Pancreas (tissue), 10 donors: ENCODE measurements at regions of chr2 and their contacts with region 1.

Region 1: DNA sequence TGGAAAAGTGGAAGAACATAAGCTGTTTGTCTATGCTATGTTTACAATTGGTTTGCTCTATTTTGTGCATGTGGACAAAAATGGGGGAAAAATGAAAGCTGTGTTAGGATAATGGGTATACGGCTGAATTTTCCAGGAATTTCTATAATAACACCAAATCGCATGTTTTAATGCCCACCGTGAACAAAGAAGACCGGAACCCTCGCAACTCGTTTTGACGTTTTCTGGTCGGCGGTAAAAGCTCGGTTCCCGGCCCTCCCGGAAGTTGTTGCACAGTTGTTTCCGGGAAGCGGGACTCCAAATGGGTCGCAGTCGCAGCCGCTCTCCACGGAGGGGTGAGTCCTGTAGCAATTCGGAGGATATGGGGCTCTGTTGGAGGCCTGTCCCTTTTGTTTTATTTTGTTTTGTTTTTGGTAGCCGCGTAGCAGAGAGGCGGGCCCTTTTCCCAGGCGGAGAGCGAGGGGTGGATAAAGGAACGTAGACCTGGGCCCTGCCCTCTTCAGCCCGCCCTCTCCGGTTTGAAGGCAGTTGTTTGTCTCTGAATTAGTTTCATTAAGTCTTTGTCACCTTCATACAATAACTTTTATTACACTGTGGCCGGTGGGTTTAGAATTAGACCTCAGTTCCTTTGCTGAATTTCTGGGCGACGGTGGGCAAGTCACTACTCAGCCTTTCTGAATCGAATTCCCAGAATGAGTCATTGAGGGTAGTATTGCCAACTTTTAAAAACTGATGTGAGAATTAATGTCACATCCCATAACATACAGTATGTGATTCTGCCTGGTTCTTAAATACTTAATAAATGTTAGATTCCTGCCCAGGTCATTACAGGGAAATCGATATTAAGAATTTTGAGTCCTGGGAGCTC is at the start of gene SNRNP27:
- DNase-seq: peak; percentile 70 to 91 (median 80)
- ATAC-seq: peak; percentile 94 to 98 (median 94)
- H3K4me3 ChIP-seq: peak within 1 kb of the TSS; percentile 49 to 76 (median 64)
- H3K27ac ChIP-seq: peak within 1 kb of the TSS; percentile 54 to 81 (median 67)
- H3K4me1 ChIP-seq: peaks cover 0 to 11% (median 6%) of the 10 kb centered on the region in 3 donors
- H3K27me3 ChIP-seq: no peaks in the 10 kb centered on the region
- CTCF ChIP-seq: no peak
- total RNA-seq, gene SNRNP27: 8.3 to 18.5 (median 12.1) TPM

Region 2: GRCh38 chr2:68837164-68837860 is 1056.6 kb before region 1 on chr2:
- intact Hi-C with region 1: no loop called
- DNase-seq: peak; percentile 33 to 83 (median 56)
- ATAC-seq: peak; percentile 60 to 78 (median 66)
- H3K4me3 ChIP-seq: no peak overlapping the region
- H3K27ac ChIP-seq: no peak overlapping the region
- H3K4me1 ChIP-seq: peaks cover 0 to 4% (median 0%) of the 10 kb centered on the region in 3 donors
- H3K27me3 ChIP-seq: no peaks in the 10 kb centered on the region
- CTCF ChIP-seq: peak; percentile 44 to 51 (median 46)

Region 3: GRCh38 chr2:70301344-70302194 is 407.7 kb after region 1 on chr2 and contains the start of gene FAM136A:
- intact Hi-C with region 1: loop called in 1 of 3 experiments (anchors 10 kb)
- DNase-seq: peak; percentile 79 to 98 (median 92)
- ATAC-seq: peak; percentile 94 to 98 (median 96)
- H3K4me3 ChIP-seq: peak within 1 kb of the TSS; percentile 63 to 98 (median 91)
- H3K27ac ChIP-seq: peak within 1 kb of the TSS; percentile 73 to 90 (median 87)
- H3K4me1 ChIP-seq: peaks cover 0 to 6% (median 5%) of the 10 kb centered on the region in 3 donors
- H3K27me3 ChIP-seq: no peaks in the 10 kb centered on the region
- CTCF ChIP-seq: peak; percentile 95 to 99 (median 97)
- total RNA-seq, gene FAM136A: 23.7 to 35.5 (median 29.4) TPM

Region 4: DNA sequence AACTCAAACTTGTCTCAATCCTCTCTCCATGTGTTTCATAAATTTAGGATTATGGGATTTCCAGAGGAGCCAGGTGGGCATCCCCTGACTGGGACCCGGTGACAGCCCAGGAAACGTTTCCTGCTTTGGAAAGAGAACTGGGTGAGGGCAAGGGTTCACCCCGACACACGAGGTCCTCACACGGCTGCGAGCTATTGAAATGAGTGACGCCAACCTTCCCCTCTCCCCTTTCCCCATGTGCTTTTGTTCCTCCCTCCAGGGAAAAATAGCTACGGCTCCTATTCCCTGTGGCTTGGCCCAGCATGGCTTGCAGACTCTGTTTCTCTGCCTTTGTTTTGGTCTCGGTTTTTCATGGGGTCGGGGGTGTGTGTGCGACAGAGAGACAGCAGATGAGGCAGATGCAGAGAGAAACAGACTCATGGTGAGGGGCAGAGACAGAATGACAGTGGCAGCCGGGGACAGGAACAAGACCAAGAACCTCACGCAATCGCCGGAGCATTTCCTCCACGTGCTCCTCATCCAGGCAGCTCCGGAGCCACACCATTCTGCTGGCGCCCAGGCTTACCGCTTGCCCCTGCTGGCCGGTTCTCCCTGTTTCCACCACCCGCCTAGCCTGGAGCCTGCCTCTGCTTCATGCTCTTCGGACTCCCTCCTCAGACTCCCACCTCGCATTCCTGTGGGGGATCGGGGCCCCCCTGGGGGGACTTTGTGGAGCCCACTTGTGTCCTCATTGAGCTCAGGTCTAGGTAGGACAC is 1798.0 kb after region 1 on chr2:
- intact Hi-C with region 1: no loop called
- DNase-seq: peak in 2 of 6 donors; percentile 40 to 47
- ATAC-seq: no peak
- H3K4me3 ChIP-seq: no peak overlapping the region
- H3K27ac ChIP-seq: no peak overlapping the region
- H3K4me1 ChIP-seq: no peaks in the 10 kb centered on the region
- H3K27me3 ChIP-seq: no peaks in the 10 kb centered on the region
- CTCF ChIP-seq: no peak